ENCODE measurements at regions of chr19 and their contacts with region 1.

Region 1: DNA sequence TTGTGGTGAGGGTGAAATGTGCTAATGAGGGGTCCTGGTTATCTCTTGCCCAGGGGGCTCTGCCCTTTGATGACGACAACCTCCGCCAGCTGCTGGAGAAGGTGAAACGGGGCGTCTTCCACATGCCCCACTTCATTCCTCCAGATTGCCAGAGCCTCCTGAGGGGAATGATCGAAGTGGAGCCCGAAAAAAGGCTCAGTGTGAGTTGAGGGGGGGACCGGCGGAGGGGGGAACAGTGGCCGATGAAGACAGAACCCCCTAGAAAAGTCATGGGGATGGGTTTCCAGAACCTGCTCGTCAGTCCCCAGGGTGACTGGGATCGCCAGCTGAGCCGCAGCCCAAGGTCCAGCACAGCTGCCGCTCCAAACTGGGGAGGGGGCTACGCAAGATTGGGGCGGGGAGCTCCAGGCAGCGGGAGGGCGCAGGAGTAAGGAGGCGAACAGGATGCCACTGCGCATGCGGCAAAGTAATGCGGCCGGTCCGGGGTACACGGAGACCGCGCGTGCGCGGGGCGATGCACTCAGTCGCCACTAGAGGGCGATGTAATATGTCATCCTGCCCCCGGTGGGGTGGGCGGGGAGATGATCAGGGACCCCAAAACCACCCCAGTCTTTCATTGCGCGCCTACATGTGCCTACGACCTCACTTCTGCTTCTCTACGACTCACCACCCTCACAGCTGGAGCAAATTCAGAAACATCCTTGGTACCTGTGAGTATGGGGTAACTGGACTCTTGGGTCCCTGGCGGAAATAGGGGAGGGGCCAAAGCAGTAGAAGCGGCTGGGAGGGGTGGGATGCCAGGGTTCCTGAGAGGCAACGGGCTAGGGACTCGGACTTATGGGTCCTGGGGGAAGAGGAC is 17.9 kb downstream of the BRSK1 start:
- H3K4me3 ChIP-seq: peak overlapping the region; percentile 18
- H3K27ac ChIP-seq: no peak overlapping the region; the same call in 1 of the 2 replicates
- H3K4me1 ChIP-seq: peaks cover 3% of the 10 kb centered on the region; the same call in 1 of the 2 replicates
- CTCF ChIP-seq: peak; percentile 93

Region 2: DNA sequence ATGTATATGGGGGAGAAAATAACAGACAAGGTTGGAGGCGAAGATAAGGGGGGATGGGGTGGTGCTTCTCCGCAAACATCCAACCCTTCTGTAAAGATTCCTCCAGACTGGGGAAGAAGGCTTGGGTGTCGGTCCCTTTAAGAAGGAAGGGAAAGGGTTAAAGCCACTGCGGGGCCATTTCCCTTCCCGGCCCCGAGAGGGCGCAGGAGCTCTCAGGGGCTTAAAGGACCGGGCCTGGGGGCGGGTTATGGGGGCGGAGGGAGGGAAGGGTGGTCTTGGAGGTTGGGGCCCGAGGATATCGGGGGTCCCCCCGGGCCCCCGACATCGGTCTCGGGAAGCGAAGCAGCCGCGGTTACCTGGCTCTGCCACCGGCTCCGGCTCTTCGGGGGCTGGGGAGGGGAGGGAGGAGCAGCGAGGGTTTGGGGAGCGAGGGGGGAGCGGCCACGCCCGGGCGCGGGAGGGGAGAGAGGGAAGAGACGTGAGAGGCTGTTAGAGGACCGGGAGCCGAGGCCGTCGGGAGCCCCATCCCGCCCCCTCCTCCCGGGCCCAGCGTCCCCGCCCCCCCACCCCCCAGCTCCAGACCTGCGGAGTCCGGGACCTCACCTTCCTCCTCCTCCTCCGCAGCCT is 155.5 kb before region 1 on chr19:
- CTCF ChIA-PET with region 1: interaction called, 17 read pairs
- POLR2A ChIA-PET with region 1: no interaction called
- H3K4me3 ChIP-seq: peak overlapping the region; percentile 46
- H3K27ac ChIP-seq: no peak overlapping the region
- H3K4me1 ChIP-seq: no peaks in the 10 kb centered on the region
- CTCF ChIP-seq: peak; percentile 61; the same call in 1 of the 2 replicates

Region 3: GRCh38 chr19:55289117-55289796 is 12.4 kb before region 1 on chr19:
- CTCF ChIA-PET with region 1: interaction called, 62 read pairs
- POLR2A ChIA-PET with region 1: no interaction called
- H3K4me3 ChIP-seq: no peak overlapping the region
- H3K27ac ChIP-seq: no peak overlapping the region
- H3K4me1 ChIP-seq: no peaks in the 10 kb centered on the region
- CTCF ChIP-seq: no peak

Region 4: GRCh38 chr19:55319785-55320184 is 18.1 kb after region 1 on chr19:
- CTCF ChIA-PET with region 1: interaction called, 45 read pairs
- POLR2A ChIA-PET with region 1: interaction called, 4 read pairs
- H3K4me3 ChIP-seq: no peak overlapping the region
- H3K27ac ChIP-seq: no peak overlapping the region
- H3K4me1 ChIP-seq: no peaks in the 10 kb centered on the region
- CTCF ChIP-seq: no peak

Region 5: DNA sequence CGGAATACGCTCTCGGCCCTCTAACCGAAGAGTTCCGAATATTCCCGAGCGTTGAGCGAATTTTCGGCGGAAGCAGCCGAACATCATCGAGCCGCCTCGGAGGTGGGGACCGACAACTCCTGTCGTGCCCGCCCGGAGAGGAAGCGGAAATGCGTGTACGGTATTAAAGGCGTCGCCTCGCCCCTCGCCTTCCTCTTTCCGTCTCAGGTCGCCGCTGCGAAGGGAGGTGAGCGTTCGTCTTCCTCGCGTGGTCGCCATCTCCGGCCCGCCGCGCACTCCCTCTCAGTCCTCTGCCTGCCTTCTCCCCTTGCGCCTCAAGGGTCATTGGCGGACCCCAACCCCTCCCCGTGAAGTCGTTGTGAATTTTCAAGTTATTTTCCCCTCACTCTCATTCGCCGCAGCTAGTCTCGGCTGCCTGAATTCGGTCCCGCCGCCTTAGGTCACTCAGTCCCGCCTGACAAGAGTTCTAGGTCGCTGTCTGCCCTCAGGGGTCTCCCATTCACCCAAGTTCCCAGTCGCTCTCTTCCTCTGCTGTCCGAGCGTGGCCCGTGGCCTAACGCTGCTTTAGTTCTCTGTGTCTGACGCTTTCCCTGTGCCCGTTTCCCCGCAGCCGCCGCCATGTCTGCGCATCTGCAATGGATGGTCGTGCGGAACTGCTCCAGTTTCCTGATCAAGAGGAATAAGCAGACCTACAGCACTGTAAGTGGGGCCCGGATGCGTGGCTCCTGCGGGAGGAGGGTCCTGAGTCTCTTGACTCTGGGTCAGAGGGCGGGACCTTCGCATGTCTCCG is 84.2 kb after region 1 on chr19 and contains the start of gene RPL28:
- CTCF ChIA-PET with region 1: interaction called, 23 read pairs
- POLR2A ChIA-PET with region 1: interaction called, 8 read pairs
- H3K4me3 ChIP-seq: peak within 1 kb of the TSS; percentile 94
- H3K27ac ChIP-seq: peak within 1 kb of the TSS; percentile 84
- H3K4me1 ChIP-seq: peaks cover 27% of the 10 kb centered on the region
- CTCF ChIP-seq: 0 out of 2 replicates have a peak, but pooled peaks have one; percentile 31

Measured in HEK293 (cell line).